WTC11 (cell line): ENCODE measurements at regions of chr3 and their contacts with region 1.

Region 1: DNA sequence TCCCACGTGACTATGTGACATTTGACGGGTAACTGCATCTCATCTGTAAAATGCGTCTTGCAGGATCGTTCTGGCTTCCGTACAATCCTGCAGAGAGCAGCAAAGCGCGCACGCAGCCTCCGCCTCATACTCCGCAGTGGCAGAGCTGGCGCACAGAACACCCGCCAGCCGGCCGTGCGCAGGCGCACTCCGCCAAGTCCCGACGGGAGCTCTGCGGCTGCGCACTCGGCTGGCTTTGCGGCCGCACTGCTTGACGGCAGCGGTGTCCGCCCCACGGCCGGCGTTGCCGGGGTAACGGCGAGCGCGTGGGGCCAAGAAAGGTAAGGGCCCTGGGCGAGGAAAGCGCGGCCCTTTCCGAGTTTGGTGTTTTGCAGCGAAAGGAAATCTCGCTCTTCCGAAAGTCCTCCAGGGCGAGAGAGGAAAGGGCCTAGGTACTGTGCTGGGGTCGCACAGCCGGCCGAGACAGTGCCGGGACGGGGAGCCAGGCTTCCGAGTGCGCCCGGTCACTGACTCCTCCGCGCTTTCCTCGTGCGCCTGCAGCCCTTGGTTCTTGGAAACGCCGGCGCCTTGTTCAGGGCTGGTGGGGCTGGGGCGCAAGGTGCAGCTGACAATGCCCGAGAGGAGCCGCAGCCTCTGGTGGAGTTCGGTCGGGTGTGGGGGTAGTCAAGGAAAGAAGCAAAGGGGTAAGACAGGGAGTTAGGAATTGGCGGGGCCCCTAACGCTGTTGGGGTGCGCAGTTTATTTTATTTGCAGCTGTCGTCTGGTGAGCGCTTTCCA is at the start of gene TSEN2:
- DNase-seq: peak; percentile 93
- ATAC-seq: peak; percentile 83
- H3K4me3 Mint-ChIP-seq: peak within 1 kb of the TSS; percentile 97
- H3K27ac Mint-ChIP-seq: peak within 1 kb of the TSS; percentile 93
- H3K4me1 Mint-ChIP-seq: peaks cover 27% of the 10 kb centered on the region
- H3K27me3 Mint-ChIP-seq: no peaks in the 10 kb centered on the region; the same call in 1 of the 2 replicates
- CTCF ChIP-seq: no peak
- total RNA-seq, gene TSEN2: 19.9 to 21.1 TPM (median 20.2 TPM) in 3 replicates

Region 2: GRCh38 chr3:12135029-12135657 is 349.2 kb before region 1 on chr3:
- CTCF ChIA-PET with region 1: interaction called, 49 read pairs
- POLR2A ChIA-PET with region 1: no interaction called
- DNase-seq: peak; percentile 74
- ATAC-seq: peak; percentile 93
- H3K4me3 Mint-ChIP-seq: no peak overlapping the region
- H3K27ac Mint-ChIP-seq: no peak overlapping the region
- H3K4me1 Mint-ChIP-seq: no peaks in the 10 kb centered on the region; the same call in 1 of the 2 replicates
- H3K27me3 Mint-ChIP-seq: no peaks in the 10 kb centered on the region
- CTCF ChIP-seq: peak; percentile 61; the same call in 1 of the 2 replicates

Region 3: DNA sequence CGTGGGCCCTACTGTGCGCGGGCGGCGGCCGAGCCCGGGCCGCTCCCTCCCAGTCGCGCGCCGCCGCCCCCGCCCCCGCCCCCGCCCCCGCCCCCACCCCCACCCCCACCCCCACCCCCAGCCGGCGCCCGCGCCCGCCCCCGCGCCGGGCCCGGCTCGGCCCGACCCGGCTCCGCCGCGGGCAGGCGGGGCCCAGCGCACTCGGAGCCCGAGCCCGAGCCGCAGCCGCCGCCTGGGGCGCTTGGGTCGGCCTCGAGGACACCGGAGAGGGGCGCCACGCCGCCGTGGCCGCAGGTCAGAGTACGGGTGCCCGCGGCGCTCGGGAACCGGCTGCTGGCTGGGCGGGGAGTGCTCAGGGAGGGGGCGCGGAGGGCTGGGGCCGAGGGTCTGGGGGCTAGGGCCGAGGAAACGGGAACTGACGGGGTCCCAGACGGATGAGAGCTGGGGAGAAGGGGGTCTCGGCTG is 196.6 kb before region 1 on chr3:
- CTCF ChIA-PET with region 1: interaction called, 13 read pairs
- POLR2A ChIA-PET with region 1: no interaction called
- DNase-seq: peak; percentile 46
- ATAC-seq: peak; percentile 60
- H3K4me3 Mint-ChIP-seq: peak overlapping the region; percentile 65
- H3K27ac Mint-ChIP-seq: no peak overlapping the region
- H3K4me1 Mint-ChIP-seq: no peaks in the 10 kb centered on the region
- H3K27me3 Mint-ChIP-seq: peaks cover 73% of the 10 kb centered on the region
- CTCF ChIP-seq: no peak

Region 4: DNA sequence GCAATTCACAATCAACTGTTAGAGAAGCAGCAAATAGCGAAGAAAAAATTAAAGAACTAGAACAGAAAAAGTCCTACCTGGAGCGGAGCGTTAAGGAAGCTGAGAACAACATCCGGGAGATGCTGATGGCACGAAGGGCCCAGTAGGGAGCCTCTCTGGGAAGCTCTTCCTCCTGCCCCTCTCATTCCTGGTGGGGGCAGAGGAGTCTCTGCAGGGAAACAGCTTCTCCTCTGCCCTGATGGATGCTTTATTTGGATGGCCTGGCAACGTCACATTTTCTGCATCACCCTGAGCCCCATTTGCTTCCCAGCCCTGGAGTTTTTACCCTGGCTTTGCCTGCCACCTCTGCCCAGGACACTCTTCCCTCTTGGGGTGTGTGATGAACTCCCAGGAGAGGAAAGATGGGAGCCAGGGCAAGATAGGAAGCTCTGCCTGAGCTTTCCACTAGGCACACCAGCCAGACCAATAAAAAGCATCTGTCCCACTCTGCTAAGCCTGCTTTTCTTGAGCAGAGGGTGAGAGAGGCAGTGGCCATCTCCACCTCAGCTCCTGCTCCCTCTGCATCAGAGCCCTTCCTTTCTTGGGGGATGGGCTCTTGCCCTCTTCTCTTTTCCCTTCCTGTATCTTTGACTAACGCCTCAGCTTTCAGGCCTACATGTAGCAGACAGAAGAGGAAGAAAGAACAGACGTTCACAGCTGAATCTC is 156.1 kb before region 1 on chr3:
- CTCF ChIA-PET with region 1: interaction called, 17 read pairs
- POLR2A ChIA-PET with region 1: no interaction called
- DNase-seq: no peak
- ATAC-seq: peak; percentile 60
- H3K4me3 Mint-ChIP-seq: no peak overlapping the region
- H3K27ac Mint-ChIP-seq: no peak overlapping the region
- H3K4me1 Mint-ChIP-seq: peaks cover 22% of the 10 kb centered on the region
- H3K27me3 Mint-ChIP-seq: no peaks in the 10 kb centered on the region; the same call in 1 of the 2 replicates
- CTCF ChIP-seq: no peak

Region 5: DNA sequence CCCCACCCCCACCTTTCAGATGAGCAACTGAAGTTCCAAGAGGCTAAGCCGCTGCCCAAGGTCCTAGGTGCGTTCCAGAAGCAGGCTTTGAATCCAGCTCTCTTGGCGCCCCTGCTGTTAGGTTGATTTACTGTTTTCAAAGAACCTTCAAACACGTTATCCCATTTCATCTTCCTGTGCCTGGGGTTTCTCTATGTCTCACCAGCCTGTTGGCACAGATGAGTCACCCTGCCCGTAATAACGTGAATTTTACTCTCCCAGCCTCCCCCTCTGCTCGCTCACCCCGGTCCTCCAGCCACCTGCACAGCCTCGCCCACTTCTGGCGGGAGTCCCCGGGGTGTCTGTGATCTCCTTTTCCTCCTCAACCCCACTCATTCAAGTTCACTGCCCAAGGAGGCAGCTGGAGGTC is 13.1 kb before region 1 on chr3:
- CTCF ChIA-PET with region 1: interaction called, 23 read pairs
- POLR2A ChIA-PET with region 1: interaction called, 3 read pairs
- DNase-seq: no peak
- ATAC-seq: peak; percentile 62
- H3K4me3 Mint-ChIP-seq: no peak overlapping the region
- H3K27ac Mint-ChIP-seq: no peak overlapping the region
- H3K4me1 Mint-ChIP-seq: peaks cover 13% of the 10 kb centered on the region; the same call in 1 of the 2 replicates
- H3K27me3 Mint-ChIP-seq: no peaks in the 10 kb centered on the region; the same call in 1 of the 2 replicates
- CTCF ChIP-seq: no peak

Region 6: DNA sequence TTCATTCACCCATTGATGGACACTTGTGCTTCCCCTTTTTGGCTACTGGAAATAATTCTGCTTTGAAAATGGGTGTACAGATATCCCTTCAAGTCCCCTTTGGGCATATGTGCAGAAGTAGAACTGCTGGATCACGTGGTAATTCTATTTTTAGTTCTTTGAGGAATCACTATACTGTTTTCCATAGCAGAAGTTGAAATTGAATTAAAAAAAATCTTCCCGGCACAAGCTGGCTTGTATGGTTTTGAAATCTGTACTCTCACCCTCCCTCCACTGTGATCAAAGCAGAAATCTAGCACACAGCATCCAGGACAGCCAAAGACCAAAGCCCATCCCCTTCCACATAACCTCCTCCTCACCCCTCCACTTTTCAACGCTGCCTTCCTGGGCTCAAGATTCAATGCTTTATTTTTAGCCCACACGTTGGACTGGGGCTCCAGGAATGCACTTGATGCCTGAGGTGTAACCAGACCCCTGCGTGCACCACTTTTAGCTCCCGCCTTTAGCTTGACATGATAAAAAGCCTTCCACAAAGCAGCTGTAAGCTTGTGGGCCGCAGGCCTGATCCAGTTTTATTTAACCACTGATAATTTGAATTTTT is 244.8 kb after region 1 on chr3:
- CTCF ChIA-PET with region 1: no interaction called
- POLR2A ChIA-PET with region 1: no interaction called
- DNase-seq: peak; percentile 14
- ATAC-seq: no peak
- H3K4me3 Mint-ChIP-seq: no peak overlapping the region
- H3K27ac Mint-ChIP-seq: no peak overlapping the region
- H3K4me1 Mint-ChIP-seq: no peaks in the 10 kb centered on the region; the same call in 1 of the 2 replicates
- H3K27me3 Mint-ChIP-seq: peaks cover 4% of the 10 kb centered on the region
- CTCF ChIP-seq: no peak